Caco-2 (cell line): ENCODE measurements at regions of chr11 and their contacts with region 1.

Region 1: DNA sequence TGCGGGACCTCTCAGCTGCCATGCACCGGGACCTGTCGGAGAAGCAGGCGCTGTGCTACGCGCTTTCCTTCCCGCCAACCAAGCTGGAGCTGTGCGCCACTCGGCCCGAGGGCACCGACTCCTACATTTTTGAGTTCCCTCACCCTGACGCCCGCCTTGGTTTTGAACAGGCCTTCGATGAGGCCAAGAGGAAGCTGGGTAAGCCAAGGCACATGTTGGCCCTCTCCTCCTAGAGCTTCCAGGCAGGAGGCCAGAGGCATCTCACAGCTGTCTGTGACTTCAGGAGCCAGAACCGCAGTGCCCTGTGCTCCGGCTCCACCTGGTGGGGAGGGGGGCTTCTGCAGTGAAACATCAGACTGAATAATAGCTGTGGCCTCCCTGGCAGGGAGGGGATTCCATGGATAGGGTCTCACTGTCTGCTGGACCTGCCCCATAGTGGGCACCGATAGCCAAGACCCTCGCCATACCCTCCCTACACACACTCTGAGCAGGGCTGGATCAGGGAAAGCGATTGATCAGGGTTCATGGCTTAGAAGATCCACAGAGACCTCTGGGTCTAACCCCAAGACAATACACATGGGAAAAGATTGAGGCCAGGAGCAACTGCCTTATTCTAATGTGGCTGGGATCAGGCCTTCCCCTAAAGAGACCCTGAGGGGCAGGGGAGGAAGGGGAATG is 15.7 kb upstream of the RELT start:
- DNase-seq: peak; percentile 74 to 86
- H3K4me3 ChIP-seq: no peak overlapping the region
- H3K4me3 Mint-ChIP-seq: no peak overlapping the region
- H3K27ac Mint-ChIP-seq: no peak overlapping the region
- H3K4me1 ChIP-seq: no peaks in the 10 kb centered on the region
- H3K4me1 Mint-ChIP-seq: no peaks in the 10 kb centered on the region
- H3K27me3 ChIP-seq: no peaks in the 10 kb centered on the region
- H3K27me3 Mint-ChIP-seq: no peaks in the 10 kb centered on the region
- CTCF ChIP-seq: peak; percentile 92 to 95

Region 2: GRCh38 chr11:73314117-73314961 is 46.1 kb before region 1 on chr11:
- CTCF ChIA-PET with region 1: interaction called, 62 read pairs
- POLR2A ChIA-PET with region 1: interaction called, 3 read pairs
- intact Hi-C with region 1: no loop called
- DNase-seq: peak; percentile 88 to 93
- H3K4me3 ChIP-seq: no peak overlapping the region
- H3K4me3 Mint-ChIP-seq: peak overlapping the region; percentile 4
- H3K27ac Mint-ChIP-seq: peak overlapping the region; percentile 35
- H3K4me1 ChIP-seq: peaks cover 51% of the 10 kb centered on the region
- H3K4me1 Mint-ChIP-seq: peaks cover 32% of the 10 kb centered on the region
- H3K27me3 ChIP-seq: no peaks in the 10 kb centered on the region
- H3K27me3 Mint-ChIP-seq: no peaks in the 10 kb centered on the region
- CTCF ChIP-seq: no peak

Region 3: DNA sequence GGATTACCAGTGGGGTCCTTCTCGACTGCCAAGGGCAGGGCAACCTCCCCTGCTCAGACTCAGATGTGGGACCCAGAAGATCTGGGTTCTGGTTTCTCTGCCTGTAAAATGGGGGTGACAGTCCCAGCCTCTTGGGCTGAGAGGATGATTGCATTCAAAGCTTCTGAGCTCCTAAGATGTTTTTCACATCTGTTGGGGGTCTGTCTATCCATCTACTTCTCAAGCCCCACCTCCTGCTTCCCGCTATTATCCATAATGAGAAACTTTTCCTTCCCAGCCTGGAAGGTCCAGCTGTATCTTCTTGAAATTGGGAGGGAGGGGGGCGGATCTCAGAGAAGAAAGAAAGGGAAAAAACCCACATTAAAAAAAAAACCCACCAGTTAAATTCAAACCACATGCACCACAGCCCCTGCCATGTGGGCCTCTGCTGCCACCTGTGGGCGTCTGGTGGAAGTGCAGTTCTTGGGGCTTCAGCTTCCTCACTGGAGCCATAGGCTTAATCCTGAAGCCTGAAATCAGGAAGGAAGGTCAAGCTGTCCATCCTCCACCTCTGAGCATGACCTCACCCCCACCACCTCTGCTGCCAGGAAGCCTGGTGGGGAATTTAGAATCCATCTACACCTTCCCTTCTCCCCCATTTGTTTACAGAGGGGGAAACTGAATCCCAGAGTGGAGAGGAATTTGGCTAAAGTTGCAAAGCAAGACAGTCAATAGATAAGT is 25.1 kb before region 1 on chr11:
- CTCF ChIA-PET with region 1: interaction called, 16 read pairs
- POLR2A ChIA-PET with region 1: interaction called, 3 read pairs
- intact Hi-C with region 1: no loop called
- DNase-seq: peak; percentile 91 to 96
- H3K4me3 ChIP-seq: no peak overlapping the region
- H3K4me3 Mint-ChIP-seq: no peak overlapping the region
- H3K27ac Mint-ChIP-seq: peak overlapping the region; percentile 19
- H3K4me1 ChIP-seq: peaks cover 52% of the 10 kb centered on the region
- H3K4me1 Mint-ChIP-seq: peaks cover 36% of the 10 kb centered on the region
- H3K27me3 ChIP-seq: no peaks in the 10 kb centered on the region
- H3K27me3 Mint-ChIP-seq: no peaks in the 10 kb centered on the region
- CTCF ChIP-seq: peak; percentile 100

Region 4: DNA sequence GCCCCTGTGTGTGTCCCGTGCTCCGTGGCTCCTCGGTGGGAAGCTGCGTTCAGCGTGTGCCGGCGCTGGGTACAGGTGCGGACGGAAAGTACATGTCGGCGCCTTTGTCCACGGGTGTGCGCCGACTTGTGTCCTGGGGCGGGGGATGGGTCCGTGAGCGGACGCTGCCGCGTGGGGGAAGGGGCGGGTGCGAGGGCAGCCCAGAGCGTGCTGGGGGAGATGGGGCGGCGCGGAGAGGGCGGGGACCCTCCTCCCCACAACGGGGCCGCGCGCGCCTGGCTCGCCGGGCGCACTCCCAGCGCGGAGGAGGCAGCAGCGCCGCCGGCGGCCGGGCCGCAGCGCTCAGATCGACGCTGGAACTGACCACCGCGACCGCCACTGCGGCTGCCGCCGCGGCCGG is 17.8 kb before region 1 on chr11:
- CTCF ChIA-PET with region 1: interaction called, 10 read pairs
- POLR2A ChIA-PET with region 1: no interaction called
- intact Hi-C with region 1: no loop called
- DNase-seq: no peak
- H3K4me3 ChIP-seq: peak overlapping the region; percentile 31
- H3K4me3 Mint-ChIP-seq: peak overlapping the region; percentile 58
- H3K27ac Mint-ChIP-seq: no peak overlapping the region
- H3K4me1 ChIP-seq: no peaks in the 10 kb centered on the region
- H3K4me1 Mint-ChIP-seq: no peaks in the 10 kb centered on the region
- H3K27me3 ChIP-seq: no peaks in the 10 kb centered on the region
- H3K27me3 Mint-ChIP-seq: no peaks in the 10 kb centered on the region
- CTCF ChIP-seq: no peak

Region 5: GRCh38 chr11:73376160-73376802 is 15.8 kb after region 1 on chr11 and contains the start of gene RELT:
- CTCF ChIA-PET with region 1: interaction called, 7 read pairs
- POLR2A ChIA-PET with region 1: no interaction called
- intact Hi-C with region 1: loop called (anchors 1 kb)
- DNase-seq: peak; percentile 92 to 99
- H3K4me3 ChIP-seq: peak within 1 kb of the TSS; percentile 91
- H3K4me3 Mint-ChIP-seq: peak within 1 kb of the TSS; percentile 83
- H3K27ac Mint-ChIP-seq: peak within 1 kb of the TSS; percentile 37
- H3K4me1 ChIP-seq: peaks cover 11% of the 10 kb centered on the region; the same call in 1 of the 2 replicates
- H3K4me1 Mint-ChIP-seq: peaks cover 18% of the 10 kb centered on the region
- H3K27me3 ChIP-seq: no peaks in the 10 kb centered on the region
- H3K27me3 Mint-ChIP-seq: no peaks in the 10 kb centered on the region
- CTCF ChIP-seq: peak; percentile 96 to 98
- total RNA-seq, gene RELT: 11.7 and 12.7 TPM in 2 replicates

Region 6: DNA sequence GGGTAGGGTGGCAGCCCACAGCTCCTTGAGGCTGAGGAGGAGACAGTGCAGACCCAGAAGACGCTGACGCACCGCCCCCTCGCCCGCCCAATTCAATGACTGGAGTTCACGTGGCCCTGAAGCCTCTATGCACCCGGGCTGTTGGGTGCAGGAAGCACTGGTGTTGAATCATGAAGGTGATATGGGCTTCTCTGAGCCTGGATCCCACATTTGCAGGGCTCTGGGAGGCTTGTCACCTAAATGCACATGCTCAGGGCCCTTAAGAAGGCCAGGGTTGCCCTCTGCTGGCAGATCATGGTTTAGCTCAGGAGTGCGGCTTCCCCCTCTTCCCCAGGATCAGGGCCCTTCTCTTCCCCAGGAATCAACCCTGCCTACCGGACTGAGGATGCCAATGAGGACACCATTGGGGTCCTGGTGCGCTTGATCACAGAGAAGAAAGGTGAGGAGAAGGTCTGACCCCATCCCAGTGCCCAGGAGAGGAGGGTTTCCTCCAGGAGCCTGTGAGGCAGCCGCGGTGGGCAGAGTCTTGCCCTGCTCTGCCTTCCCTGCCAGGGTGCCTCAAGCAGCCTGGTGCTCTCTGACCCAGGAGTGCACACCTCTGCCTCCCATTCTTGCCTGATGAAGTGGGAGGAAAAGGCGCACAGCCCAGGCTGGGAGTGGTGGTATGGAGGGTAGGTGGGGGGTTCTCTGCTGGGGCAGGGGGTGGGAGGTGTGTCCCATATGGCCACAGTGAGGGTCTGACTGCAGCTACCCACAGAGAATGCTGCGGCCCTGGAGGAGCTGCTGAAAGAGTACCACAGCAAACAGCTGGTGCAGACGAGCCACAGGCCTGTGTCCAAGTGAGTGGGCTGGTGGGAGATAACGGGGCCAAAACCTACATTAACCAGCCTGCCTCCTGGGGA is 33.3 kb after region 1 on chr11:
- CTCF ChIA-PET with region 1: interaction called, 18 read pairs
- POLR2A ChIA-PET with region 1: no interaction called
- intact Hi-C with region 1: no loop called
- DNase-seq: peak; percentile 85 to 89
- H3K4me3 ChIP-seq: no peak overlapping the region
- H3K4me3 Mint-ChIP-seq: no peak overlapping the region
- H3K27ac Mint-ChIP-seq: no peak overlapping the region
- H3K4me1 ChIP-seq: no peaks in the 10 kb centered on the region
- H3K4me1 Mint-ChIP-seq: no peaks in the 10 kb centered on the region
- H3K27me3 ChIP-seq: no peaks in the 10 kb centered on the region
- H3K27me3 Mint-ChIP-seq: no peaks in the 10 kb centered on the region
- CTCF ChIP-seq: peak; percentile 92 to 97